ENCODE measurements at regions of chr2 and their contacts with region 1.

Region 1: DNA sequence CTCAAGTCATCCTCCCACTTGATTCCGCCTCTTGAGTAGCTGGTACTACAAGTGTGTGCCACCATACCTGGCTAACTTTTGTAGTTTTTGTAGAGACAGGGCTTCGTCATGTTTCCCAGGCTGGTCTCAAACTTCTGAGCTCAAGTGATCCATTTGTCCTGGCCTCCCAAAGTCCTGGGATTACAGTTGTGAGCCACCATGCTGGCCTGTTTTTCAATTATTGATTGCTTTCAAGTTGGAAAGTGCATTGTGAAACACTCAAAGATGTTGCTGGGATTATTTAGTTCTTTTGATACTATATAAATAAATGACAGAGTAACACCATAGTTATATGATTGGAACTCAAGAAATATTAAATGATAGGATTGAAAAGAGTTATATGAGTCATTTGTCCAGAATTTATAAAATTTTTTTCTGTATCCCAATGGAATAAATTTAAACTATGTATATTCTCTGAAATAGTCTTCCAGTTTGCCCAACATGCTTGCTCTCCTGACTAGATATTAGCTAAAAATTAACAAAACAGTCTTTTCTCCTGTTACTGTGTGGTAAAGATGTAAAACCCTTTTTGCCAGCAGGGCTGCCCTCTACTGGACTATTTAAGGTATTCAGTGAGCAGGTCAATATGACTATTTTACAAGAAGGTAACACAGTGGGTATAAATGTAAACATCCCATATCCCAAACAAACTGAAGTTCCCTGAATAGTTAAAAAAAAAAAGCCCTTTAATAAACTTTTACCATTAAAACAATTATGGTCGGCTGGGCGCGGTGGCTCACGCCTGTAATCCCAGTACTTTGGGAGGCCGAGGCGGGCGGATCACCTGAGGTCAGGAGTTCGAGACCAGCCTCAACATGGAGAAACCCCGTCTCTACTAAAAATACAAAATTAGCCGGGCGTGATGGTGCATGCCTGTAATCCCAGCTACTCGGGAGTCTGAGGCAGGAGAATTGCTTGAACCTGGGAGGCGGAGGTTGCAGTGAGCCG is 42.7 kb downstream of the ACSL3 start:
- DNase-seq: peak; percentile 63
- H3K4me3 ChIP-seq: no peak overlapping the region
- H3K27ac ChIP-seq: peak overlapping the region in 1 of 2 experiments; percentile 82; a peak in 2 of 4 replicates
- H3K4me1 ChIP-seq: peaks cover 0 to 24% of the 10 kb centered on the region in 2 experiments; a peak in 1 of 4 replicates
- H3K27me3 ChIP-seq: no peaks in the 10 kb centered on the region
- CTCF ChIP-seq: peak; percentile 89
- EP300 ChIP-seq: no peak
- RAD21 ChIP-seq: peak; percentile 87

Region 2: GRCh38 chr2:222860740-222861410 is 42.7 kb before region 1 on chr2 and contains the start of gene ACSL3:
- CTCF ChIA-PET with region 1: interaction called, 25 read pairs
- POLR2A ChIA-PET with region 1: no interaction called
- DNase-seq: peak; percentile 97
- H3K4me3 ChIP-seq: peak within 1 kb of the TSS; percentile 69 to 95
- H3K27ac ChIP-seq: peak within 1 kb of the TSS; percentile 68 to 95
- H3K4me1 ChIP-seq: peaks cover 25 to 30% of the 10 kb centered on the region in 2 experiments
- H3K27me3 ChIP-seq: no peaks in the 10 kb centered on the region
- CTCF ChIP-seq: no peak; the same call in 1 of the 2 replicates
- EP300 ChIP-seq: peak in 1 of 2 experiments; percentile 31; a peak in 1 of 4 replicates
- RAD21 ChIP-seq: no peak; the same call in 1 of the 2 replicates
- polyA plus RNA-seq, gene ACSL3: 15.7 and 25.2 TPM in 2 replicates

Region 3: GRCh38 chr2:222892321-222892720 is 11.2 kb before region 1 on chr2:
- CTCF ChIA-PET with region 1: interaction called, 26 read pairs
- POLR2A ChIA-PET with region 1: no interaction called
- DNase-seq: no peak
- H3K4me3 ChIP-seq: no peak overlapping the region
- H3K27ac ChIP-seq: 0 out of 4 replicates have a peak overlapping the region, but pooled peaks of 1 of the 2 experiments have one; percentile 6
- H3K4me1 ChIP-seq: no peaks in the 10 kb centered on the region; a peak in 2 of 4 replicates
- H3K27me3 ChIP-seq: no peaks in the 10 kb centered on the region
- CTCF ChIP-seq: no peak
- EP300 ChIP-seq: no peak
- RAD21 ChIP-seq: no peak

Measured in SK-N-SH (cell line).